Caco-2 (cell line): ENCODE measurements at regions of chr7 and their contacts with region 1.

Region 1: DNA sequence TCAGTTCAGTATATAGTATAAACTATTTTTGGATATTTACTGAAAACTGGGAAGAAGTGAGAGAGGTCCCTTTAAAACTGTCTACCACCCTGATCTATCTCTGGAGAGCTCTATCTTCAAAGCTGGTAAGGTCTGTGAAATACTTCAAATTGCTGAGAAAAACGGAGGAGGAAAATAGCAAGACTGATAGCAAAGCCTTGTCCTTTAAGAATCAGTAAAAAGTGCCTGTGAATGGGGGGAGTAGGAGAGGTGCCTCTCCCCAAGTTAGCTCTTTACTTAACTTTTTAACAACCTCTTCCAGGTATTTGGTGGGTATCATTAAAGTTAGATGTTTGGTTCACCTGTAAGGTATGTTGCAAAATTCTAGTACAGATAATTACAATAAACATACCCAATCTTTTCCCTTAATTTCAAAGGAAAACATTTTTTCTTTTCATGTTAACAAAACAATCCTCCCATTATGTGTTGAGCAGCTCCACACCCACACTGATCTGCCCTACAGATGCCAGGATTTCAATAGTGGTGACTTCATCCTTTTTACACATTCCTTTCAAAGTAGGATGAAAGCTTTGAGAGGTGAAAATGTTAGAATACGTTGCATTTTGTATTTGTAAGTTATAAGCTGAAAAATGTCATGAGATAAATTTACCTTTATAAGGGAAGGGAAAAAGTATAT is 149.2 kb downstream of the CRPPA start:
- DNase-seq: peak; percentile 45 to 46
- H3K4me3 ChIP-seq: no peak overlapping the region
- H3K4me3 Mint-ChIP-seq: peak overlapping the region; percentile 7
- H3K27ac Mint-ChIP-seq: peak overlapping the region; percentile 59
- H3K4me1 ChIP-seq: peaks cover 23% of the 10 kb centered on the region
- H3K4me1 Mint-ChIP-seq: peaks cover 18% of the 10 kb centered on the region
- H3K27me3 ChIP-seq: no peaks in the 10 kb centered on the region
- H3K27me3 Mint-ChIP-seq: no peaks in the 10 kb centered on the region
- CTCF ChIP-seq: no peak

Region 2: DNA sequence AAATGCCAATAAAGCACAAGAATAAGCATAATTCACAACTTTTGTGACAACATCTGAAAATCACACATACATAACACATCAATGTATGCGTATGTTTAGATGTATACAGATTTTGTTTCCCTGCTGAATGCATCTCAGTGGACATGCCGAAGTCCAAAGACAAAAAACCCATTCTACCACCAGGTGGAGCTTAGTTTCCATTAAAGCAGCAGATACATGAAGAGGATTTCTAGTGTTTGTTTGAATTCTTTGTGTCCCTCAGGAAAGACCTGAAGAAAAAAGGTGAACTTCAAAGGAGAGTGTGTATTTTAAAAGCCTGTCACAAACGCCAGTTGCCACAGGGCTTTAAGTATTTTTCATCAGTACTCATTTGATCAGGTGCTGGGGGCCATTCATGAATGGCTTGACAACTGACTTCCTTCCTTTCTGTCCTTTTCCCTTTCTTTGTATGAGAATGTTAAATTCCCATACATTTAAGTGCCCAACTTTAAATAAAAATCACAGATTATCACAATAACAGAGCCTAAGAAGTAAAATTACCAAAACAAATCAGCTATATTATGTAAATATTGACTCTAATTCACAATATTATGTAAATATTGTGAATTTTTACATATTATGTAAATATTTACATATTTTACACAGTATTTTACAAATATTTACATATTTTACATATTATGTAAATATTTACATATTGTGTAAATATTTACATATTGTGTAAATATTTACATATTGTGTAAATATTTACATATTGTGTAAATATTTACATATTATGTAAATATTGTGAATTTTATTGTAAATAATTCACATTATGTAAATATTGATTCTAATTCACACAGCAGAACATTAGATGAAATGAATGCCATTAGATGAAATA is 193.8 kb before region 1 on chr7:
- CTCF ChIA-PET with region 1: interaction called, 4 read pairs
- POLR2A ChIA-PET with region 1: no interaction called
- intact Hi-C with region 1: loop called (anchors 5 kb)
- DNase-seq: peak; percentile 43 to 79
- H3K4me3 ChIP-seq: no peak overlapping the region
- H3K4me3 Mint-ChIP-seq: no peak overlapping the region
- H3K27ac Mint-ChIP-seq: peak overlapping the region; percentile 65
- H3K4me1 ChIP-seq: peaks cover 9% of the 10 kb centered on the region
- H3K4me1 Mint-ChIP-seq: peaks cover 25% of the 10 kb centered on the region
- H3K27me3 ChIP-seq: no peaks in the 10 kb centered on the region
- H3K27me3 Mint-ChIP-seq: no peaks in the 10 kb centered on the region
- CTCF ChIP-seq: peak; percentile 63 to 64

Region 3: DNA sequence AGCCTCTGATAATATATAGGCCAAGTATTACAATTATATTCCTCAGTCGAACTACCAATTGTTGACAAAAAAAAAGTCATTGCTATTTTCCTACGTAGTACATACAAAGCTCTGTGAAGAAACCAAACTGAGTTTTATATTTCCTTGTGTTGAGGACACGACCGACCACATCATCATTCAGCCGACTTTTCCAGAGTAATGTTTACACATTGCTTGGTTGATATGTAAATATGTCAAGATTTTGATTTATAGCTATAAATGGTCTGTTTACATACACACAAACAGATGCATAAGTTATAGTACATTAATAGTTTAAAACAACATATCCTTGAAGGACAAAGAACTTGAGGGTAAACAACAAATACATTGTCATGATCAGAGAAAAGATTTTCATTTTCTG is 27.7 kb after region 1 on chr7:
- CTCF ChIA-PET with region 1: no interaction called
- POLR2A ChIA-PET with region 1: no interaction called
- intact Hi-C with region 1: loop called (anchors 2 kb)
- DNase-seq: no peak
- H3K4me3 ChIP-seq: no peak overlapping the region
- H3K4me3 Mint-ChIP-seq: no peak overlapping the region
- H3K27ac Mint-ChIP-seq: no peak overlapping the region
- H3K4me1 ChIP-seq: peaks cover 24% of the 10 kb centered on the region
- H3K4me1 Mint-ChIP-seq: peaks cover 12% of the 10 kb centered on the region
- H3K27me3 ChIP-seq: no peaks in the 10 kb centered on the region
- H3K27me3 Mint-ChIP-seq: no peaks in the 10 kb centered on the region
- CTCF ChIP-seq: no peak